ENCODE measurements at regions of chr1 and their contacts with region 1.

Region 1: GRCh38 chr1:108661030-108661620 is at the start of gene HENMT1:
- DNase-seq: peak; percentile 79
- CTCF ChIP-seq: no peak

Region 2: GRCh38 chr1:108643492-108644335 is 17.4 kb before region 1 on chr1:
- CTCF ChIA-PET with region 1: interaction called, 12 read pairs
- POLR2A ChIA-PET with region 1: no interaction called
- DNase-seq: peak; percentile 55
- CTCF ChIP-seq: peak; percentile 57